Calu3 (cell line): ENCODE measurements at regions of chr6 and their contacts with region 1.

Region 1: DNA sequence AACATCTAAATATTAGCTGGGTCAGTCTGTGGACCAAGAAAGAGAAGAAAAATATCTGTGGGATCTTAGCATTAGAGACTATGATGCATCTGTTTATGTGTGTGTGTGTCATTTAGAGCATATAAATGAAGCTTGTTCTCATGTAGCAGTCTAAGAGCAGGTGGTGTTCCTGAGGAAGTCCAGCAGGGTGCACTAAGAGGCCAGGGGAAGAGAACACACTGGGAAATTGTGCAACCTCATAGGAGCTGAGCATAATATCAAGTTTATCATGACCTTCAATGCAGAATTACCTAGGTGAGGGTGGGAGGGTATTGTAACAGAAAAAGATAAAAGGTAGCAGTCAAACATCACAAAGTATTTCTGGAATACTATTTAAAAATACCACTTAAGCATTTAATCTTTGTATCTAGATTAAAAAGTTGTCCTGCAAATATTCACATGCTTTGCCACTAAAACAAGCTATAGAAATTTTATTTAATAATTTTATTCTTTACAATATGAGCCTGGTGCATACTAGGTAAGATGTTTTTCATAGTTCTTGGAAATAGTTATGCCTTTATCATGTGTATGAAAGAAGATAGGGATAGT is 80.5 kb downstream of the SMPDL3A start:
- DNase-seq: peak; percentile 58
- H3K4me3 Mint-ChIP-seq: no peak overlapping the region
- H3K27ac Mint-ChIP-seq: no peak overlapping the region
- H3K4me1 Mint-ChIP-seq: peaks cover 9% of the 10 kb centered on the region
- H3K27me3 Mint-ChIP-seq: no peaks in the 10 kb centered on the region
- CTCF ChIP-seq: peak; percentile 60

Region 2: DNA sequence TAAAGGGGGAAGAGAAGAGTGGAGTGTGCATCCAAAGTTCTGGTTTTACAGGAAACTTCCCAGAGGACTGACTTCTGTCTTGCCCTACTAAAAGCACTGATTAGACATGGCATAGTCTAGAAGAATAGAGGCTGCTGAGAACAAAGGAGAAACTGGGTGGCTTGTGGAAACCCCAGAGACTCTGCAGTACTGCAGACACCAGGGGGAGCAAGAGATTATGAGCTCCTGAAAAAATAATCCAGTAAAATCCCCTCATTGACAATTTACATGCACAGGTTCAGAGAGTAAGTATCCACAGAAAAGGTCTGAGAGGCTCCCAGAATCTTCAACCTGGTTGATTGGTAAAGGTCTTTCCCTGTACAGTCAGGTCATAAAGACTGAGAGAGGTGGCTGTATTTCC is 77.8 kb after region 1 on chr6:
- CTCF ChIA-PET with region 1: interaction called, 22 read pairs
- intact Hi-C with region 1: loop called (anchors 5 kb)
- DNase-seq: peak; percentile 43
- H3K4me3 Mint-ChIP-seq: no peak overlapping the region
- H3K27ac Mint-ChIP-seq: no peak overlapping the region
- H3K4me1 Mint-ChIP-seq: no peaks in the 10 kb centered on the region
- H3K27me3 Mint-ChIP-seq: no peaks in the 10 kb centered on the region
- CTCF ChIP-seq: peak; percentile 50

Region 3: DNA sequence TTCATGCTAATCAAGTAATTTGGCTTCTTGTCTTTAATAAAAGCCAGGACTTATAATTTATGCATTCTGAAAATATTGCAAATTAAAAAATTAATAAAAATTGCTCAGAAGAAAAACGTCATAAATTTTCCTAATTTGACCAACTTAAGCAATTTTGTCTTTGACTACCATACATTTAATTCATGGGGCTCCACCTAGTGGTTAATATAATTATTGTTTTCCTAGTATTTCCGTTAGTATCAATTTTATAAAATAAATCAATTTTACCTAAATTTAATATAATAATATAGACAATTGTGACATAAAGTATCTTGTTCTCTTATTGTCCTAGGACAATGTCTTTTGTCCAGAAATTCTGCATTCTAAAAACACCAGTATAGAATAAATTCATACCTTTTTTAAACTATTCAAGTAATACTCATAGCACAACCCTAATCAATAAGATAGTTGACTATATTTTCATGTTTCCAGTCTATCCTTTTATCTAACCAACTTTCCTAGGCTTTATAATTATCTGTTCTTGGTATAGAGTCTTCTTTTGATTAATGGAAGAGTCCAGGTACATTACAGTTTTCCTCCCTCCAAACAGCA is 447.3 kb after region 1 on chr6:
- CTCF ChIA-PET with region 1: interaction called, 4 read pairs
- intact Hi-C with region 1: loop called (anchors 1 kb)
- DNase-seq: no peak
- H3K4me3 Mint-ChIP-seq: no peak overlapping the region
- H3K27ac Mint-ChIP-seq: no peak overlapping the region
- H3K4me1 Mint-ChIP-seq: no peaks in the 10 kb centered on the region
- H3K27me3 Mint-ChIP-seq: no peaks in the 10 kb centered on the region
- CTCF ChIP-seq: peak; percentile 16

Region 4: DNA sequence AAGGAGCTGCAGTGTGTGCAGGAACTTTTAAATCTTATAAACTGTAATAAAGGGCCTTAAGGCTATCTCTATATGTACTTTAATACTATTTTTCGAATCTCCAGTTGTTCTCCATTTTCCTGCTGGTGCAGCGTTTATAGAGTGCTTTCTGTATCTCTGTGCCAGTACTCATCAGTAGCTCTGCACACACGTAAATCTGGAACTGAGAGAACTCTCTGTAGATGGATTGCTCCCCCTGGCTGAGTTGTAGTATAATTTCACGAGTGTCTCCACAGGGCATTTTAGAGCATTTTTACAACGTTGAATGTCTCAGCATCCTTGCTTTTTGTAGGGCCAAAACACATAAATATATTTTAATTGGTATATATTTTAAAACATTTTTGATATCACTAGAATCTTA is 510.7 kb after region 1 on chr6:
- CTCF ChIA-PET with region 1: interaction called, 16 read pairs
- intact Hi-C with region 1: loop called (anchors 1 kb)
- DNase-seq: peak; percentile 33
- H3K4me3 Mint-ChIP-seq: no peak overlapping the region
- H3K27ac Mint-ChIP-seq: no peak overlapping the region
- H3K4me1 Mint-ChIP-seq: no peaks in the 10 kb centered on the region
- H3K27me3 Mint-ChIP-seq: no peaks in the 10 kb centered on the region
- CTCF ChIP-seq: peak; percentile 23

Region 5: GRCh38 chr6:123715006-123715875 is 845.7 kb after region 1 on chr6:
- CTCF ChIA-PET with region 1: interaction called, 17 read pairs
- intact Hi-C with region 1: loop called (anchors 10 kb)
- DNase-seq: peak; percentile 34
- H3K4me3 Mint-ChIP-seq: no peak overlapping the region
- H3K27ac Mint-ChIP-seq: no peak overlapping the region
- H3K4me1 Mint-ChIP-seq: no peaks in the 10 kb centered on the region
- H3K27me3 Mint-ChIP-seq: no peaks in the 10 kb centered on the region
- CTCF ChIP-seq: peak; percentile 17